Naive thymus-derived CD4-positive, alpha-beta T cell (primary cell): ENCODE measurements at regions of chr12 and their contacts with region 1.

Region 1: DNA sequence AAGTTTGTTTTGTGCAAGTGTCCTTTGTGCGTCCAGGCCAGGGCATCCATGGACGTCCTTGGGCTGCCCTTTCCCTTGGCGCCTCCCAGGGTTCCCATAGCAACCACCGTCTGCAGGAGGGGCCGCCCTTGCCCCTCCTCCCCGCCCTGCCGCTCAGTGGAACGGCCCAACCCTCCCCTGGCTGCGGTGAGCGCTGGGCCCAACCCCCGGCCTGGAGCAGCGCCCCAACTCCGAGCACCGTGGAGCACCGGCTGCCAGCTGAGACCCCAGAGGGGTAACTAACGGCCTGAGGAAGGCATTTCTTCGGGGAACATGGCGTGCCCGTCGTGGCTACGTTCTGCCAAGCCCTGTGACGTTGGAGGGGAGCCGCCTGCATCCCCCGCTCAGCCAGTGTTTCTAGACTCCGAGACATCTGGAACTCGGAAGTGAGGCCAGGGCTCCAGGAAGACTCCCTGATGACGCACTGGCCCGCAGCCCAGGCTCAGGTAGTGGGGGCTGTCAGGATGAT is 5.3 kb upstream of the ACACB start:
- DNase-seq: peak; percentile 24 to 62 (median 48)
- ATAC-seq: peak; percentile 89
- H3K4me3 ChIP-seq: peak overlapping the region; percentile 46
- H3K4me3 Mint-ChIP-seq: peak overlapping the region; percentile 79 to 88 (median 84)
- H3K27ac ChIP-seq: peak overlapping the region; percentile 80
- H3K27ac Mint-ChIP-seq: peak overlapping the region; percentile 61 to 92 (median 77)
- H3K4me1 ChIP-seq: peaks cover 0 to 5% of the 10 kb centered on the region in 2 donors
- H3K4me1 Mint-ChIP-seq: peaks cover 5 to 46% (median 39%) of the 10 kb centered on the region in 7 donors
- H3K27me3 ChIP-seq: no peaks in the 10 kb centered on the region
- H3K27me3 Mint-ChIP-seq: no peaks in the 10 kb centered on the region

Region 2: DNA sequence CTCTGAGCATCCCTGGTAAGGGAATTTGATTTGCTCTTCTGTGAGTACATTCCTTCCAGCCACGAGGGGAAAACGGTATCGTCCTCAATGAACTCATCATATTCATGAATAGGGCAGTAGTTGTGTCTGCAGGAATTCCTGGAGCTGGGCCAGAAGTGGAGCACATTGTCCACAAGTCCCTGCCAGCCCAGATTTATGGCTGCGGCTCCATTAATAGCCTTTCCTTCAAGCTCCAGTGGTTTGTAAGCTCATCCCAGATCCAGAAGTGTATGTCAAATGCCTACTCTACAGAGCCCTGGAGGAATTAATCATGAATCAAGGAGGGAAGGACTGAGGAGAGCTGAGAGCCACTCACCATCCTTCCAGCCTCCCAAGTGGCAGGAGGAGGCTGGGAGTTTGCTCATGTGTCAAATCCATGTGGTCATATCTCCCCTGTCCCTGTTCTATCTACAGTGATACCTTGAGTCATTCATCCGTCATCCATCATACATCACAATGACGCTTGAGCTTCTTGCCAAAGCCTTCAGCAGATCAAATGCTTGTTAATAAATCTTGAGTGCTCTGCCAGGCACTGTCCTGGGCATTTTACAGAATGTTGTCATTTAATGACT is 155.7 kb before region 1 on chr12:
- CTCF ChIA-PET with region 1: no interaction called
- POLR2A ChIA-PET with region 1: no interaction called
- intact Hi-C with region 1: no loop called
- DNase-seq: no peak
- ATAC-seq: no peak
- H3K4me3 ChIP-seq: no peak overlapping the region
- H3K4me3 Mint-ChIP-seq: no peak overlapping the region
- H3K27ac ChIP-seq: no peak overlapping the region
- H3K27ac Mint-ChIP-seq: no peak overlapping the region
- H3K4me1 ChIP-seq: no peaks in the 10 kb centered on the region
- H3K4me1 Mint-ChIP-seq: peaks cover 0 to 6% (median 4%) of the 10 kb centered on the region in 7 donors
- H3K27me3 ChIP-seq: no peaks in the 10 kb centered on the region
- H3K27me3 Mint-ChIP-seq: peaks cover 5 to 16% (median 8%) of the 10 kb centered on the region in 5 donors

Region 3: DNA sequence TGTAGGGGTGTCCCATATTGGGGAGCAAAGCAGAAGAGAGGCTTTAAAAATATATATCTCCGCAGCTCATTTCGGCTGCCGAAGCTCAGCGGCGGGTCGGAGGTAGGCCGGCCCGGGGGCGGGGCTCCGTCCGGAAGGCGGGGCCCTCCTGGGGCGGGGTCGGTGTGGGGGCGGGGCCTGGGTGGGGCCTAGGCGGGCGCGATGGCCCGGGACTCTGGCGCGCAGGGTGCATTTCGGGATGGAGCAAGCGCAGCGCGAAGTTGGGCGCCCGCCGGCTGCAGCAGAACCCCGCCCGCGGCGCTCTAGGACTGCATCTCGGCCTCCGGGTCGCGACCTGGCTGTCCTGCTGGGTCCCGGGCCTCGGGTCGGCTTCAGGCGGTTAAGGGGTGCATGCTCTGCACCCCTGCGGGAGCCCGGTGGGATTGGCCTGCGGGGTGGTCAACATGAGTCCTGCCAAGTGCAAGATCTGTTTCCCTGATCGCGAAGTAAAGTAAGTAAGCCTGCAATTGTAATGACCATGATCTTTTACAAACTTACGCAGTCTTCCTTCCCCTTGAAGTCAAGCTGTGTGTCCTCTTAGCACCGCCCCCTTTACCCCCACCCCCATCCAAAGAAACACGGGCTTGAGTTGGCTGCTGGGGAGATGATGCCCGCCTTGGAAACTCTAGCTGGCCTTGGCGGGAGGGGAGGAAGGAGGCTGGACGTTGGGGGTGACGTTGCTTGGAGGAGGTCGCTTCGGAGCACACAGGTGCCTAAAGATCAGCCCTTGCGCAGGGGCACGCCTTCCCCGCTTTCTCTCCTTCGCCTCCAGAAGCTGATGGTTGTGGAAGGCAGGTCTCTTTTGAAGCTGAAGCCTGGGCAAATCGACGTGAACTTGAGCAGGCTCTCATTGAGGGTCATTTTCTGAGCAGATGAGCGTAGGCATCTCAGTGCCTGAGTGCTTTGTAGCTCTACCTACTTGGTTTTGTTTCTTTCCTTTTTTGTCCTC is 43.7 kb after region 1 on chr12:
- CTCF ChIA-PET with region 1: interaction called, 4 read pairs
- POLR2A ChIA-PET with region 1: interaction called, 3 read pairs
- intact Hi-C with region 1: loop called (anchors 1 to 5 kb)
- DNase-seq: peak; percentile 58 to 87 (median 76)
- ATAC-seq: peak; percentile 99
- H3K4me3 ChIP-seq: peak overlapping the region; percentile 73
- H3K4me3 Mint-ChIP-seq: peak overlapping the region; percentile 85 to 98 (median 95)
- H3K27ac ChIP-seq: peak overlapping the region; percentile 61
- H3K27ac Mint-ChIP-seq: peak overlapping the region; percentile 71 to 95 (median 87)
- H3K4me1 ChIP-seq: peaks cover 5 to 10% of the 10 kb centered on the region in 2 donors
- H3K4me1 Mint-ChIP-seq: peaks cover 13 to 33% (median 19%) of the 10 kb centered on the region in 7 donors
- H3K27me3 ChIP-seq: no peaks in the 10 kb centered on the region
- H3K27me3 Mint-ChIP-seq: peaks cover 0 to 19% (median 0%) of the 10 kb centered on the region in 5 donors

Region 4: GRCh38 chr12:109385339-109386067 is 274.5 kb after region 1 on chr12:
- CTCF ChIA-PET with region 1: interaction called, 8 read pairs
- POLR2A ChIA-PET with region 1: no interaction called
- intact Hi-C with region 1: loop called (anchors 1 to 2 kb)
- DNase-seq: peak in 5 of 9 donors; percentile 2 to 28 (median 22)
- ATAC-seq: peak; percentile 32
- H3K4me3 ChIP-seq: no peak overlapping the region
- H3K4me3 Mint-ChIP-seq: no peak overlapping the region
- H3K27ac ChIP-seq: no peak overlapping the region
- H3K27ac Mint-ChIP-seq: no peak overlapping the region
- H3K4me1 ChIP-seq: no peaks in the 10 kb centered on the region
- H3K4me1 Mint-ChIP-seq: no peaks in the 10 kb centered on the region
- H3K27me3 ChIP-seq: no peaks in the 10 kb centered on the region
- H3K27me3 Mint-ChIP-seq: peaks cover 27 to 45% (median 40%) of the 10 kb centered on the region in 5 donors

Region 5: DNA sequence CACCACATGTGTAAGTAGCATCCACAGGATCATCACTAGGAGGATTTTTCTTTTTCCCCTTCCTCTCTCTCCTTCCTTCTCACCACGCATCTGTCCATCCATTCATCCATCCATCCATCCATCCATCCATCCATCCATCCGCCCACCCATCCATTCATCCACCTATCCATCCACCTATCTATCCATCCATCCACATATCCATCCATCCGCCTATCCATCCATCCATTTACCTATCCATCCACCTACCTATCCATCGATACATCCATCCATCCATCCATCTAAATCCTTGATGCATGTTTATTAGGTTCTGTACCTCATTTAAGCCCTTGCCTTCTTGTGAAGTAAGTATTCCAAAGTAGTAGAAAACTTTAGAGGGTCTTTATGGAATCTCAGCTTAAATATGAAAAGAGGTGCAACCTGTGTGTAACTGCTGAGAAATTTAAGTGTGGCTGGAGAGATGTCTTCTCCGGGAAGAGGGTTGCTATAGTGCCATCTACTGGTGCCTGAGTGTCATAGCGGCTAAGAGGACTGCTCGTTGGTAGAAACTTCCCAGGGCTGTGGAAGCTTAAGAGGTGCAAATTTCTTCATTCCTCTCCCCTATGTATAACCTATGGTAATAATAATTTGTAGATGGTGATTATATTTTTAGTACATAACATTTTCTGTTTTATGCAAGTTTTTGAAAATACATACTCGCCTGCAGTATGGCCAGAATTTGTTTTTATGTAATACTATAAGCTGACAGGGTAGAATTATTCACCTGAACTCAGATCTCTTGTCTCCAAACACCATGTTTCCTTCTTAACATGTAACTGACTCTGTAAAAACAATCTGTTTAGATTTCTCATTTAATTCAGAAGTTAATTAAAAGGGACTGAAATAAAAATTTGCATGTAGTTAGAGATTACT is 282.6 kb after region 1 on chr12:
- CTCF ChIA-PET with region 1: interaction called, 5 read pairs
- POLR2A ChIA-PET with region 1: no interaction called
- intact Hi-C with region 1: loop called (anchors 2 kb)
- DNase-seq: peak in 8 of 9 donors; percentile 10 to 55 (median 44)
- ATAC-seq: peak; percentile 82
- H3K4me3 ChIP-seq: no peak overlapping the region
- H3K4me3 Mint-ChIP-seq: no peak overlapping the region
- H3K27ac ChIP-seq: no peak overlapping the region
- H3K27ac Mint-ChIP-seq: no peak overlapping the region
- H3K4me1 ChIP-seq: no peaks in the 10 kb centered on the region
- H3K4me1 Mint-ChIP-seq: no peaks in the 10 kb centered on the region
- H3K27me3 ChIP-seq: no peaks in the 10 kb centered on the region
- H3K27me3 Mint-ChIP-seq: peaks cover 16 to 43% (median 39%) of the 10 kb centered on the region in 5 donors